Posterior vena cava (tissue), 2 donors: ENCODE measurements at regions of chr18 and their contacts with region 1.

Region 1: GRCh38 chr18:499551-500408 is 721 bp downstream of the COLEC12 start:
- DNase-seq: peak; percentile 82

Region 2: DNA sequence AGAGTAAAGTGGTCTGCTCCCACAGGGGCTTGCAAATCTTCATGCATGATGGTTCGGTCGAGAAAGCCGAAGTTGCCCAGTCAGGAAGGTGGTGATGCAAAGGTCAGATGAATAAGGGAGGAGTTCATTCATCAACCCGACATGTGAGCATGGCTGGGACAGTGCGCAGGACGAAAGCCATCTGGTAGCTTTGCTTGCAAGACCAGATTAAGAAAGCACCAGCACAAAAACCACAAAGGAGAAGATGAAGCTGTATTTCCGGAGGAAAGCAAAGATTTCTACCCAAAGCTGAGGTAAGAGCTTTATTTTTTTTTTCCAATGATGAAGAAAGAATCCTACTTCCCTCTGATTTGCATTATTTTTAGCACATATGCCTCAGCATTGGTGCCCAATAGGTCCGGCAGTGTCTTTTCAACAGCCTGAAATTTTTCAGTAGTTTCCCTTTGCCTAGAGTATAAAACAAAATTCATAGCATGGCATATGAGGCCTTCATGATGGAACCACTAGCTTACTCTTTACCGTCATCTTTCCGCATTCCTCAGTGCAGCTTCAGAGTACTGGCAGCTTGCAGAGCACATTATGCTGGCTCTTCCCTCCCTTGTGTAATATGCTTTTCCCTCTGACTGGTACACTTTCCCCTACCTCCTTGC is 120.0 kb before region 1 on chr18:
- intact Hi-C with region 1: no loop called
- DNase-seq: no peak

Region 3: DNA sequence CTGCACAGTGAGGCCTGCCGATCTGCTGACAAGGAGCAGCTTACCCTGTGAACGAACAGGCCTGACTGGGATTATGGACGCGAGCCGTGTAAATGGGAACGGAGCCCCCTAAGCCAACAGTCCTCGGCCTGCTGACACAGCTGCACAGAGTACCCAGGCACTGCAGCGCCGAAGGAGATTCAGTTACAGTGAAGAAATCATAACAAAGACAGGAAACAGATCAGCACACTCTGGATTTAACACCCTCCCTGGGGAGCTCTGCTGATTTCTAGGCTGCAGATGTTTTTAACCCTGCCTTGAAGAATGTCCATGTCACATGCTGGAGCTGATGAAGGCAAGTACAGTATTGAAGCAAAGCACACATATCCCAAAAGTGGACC is 42.6 kb before region 1 on chr18:
- intact Hi-C with region 1: no loop called
- DNase-seq: peak; percentile 83

Region 4: GRCh38 chr18:484749-485464 is 14.9 kb before region 1 on chr18:
- intact Hi-C with region 1: no loop called
- DNase-seq: no peak

Region 5: GRCh38 chr18:551404-552061 is 51.8 kb after region 1 on chr18:
- intact Hi-C with region 1: loop called in 1 of 2 experiments (anchors 10 kb)
- DNase-seq: no peak

Region 6: GRCh38 chr18:950882-951539 is 451.2 kb after region 1 on chr18:
- intact Hi-C with region 1: no loop called
- DNase-seq: no peak